ENCODE measurements at regions of chr4 and their contacts with region 1.

Region 1: DNA sequence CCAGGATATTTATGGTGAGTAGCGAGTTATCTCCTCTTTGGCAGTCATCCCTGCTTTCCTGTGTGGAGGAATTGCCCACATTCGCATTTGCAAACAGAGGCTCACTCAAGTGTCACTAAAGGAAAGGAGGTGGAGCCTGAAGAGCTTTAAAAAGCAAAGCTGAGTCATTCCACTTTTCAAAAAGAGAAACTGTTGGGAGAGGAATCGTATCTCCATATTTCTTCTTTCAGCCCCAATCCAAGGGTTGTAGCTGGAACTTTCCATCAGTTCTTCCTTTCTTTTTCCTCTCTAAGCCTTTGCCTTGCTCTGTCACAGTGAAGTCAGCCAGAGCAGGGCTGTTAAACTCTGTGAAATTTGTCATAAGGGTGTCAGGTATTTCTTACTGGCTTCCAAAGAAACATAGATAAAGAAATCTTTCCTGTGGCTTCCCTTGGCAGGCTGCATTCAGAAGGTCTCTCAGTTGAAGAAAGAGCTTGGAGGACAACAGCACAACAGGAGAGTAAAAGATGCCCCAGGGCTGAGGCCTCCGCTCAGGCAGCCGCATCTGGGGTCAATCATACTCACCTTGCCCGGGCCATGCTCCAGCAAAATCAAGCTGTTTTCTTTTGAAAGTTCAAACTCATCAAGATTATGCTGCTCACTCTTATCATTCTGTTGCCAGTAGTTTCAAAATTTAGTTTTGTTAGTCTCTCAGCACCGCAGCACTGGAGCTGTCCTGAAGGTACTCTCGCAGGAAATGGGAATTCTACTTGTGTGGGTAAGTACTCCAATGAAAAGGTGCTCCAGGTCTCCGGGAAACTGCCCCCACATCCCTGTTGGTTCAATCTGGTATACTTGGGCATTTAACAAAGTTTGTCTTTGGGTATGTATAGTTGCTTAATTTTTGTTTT is at the start of gene EGF:
- DNase-seq: peak; percentile 29 to 75 (median 38)
- ATAC-seq: peak; percentile 81
- H3K4me3 ChIP-seq: peak within 1 kb of the TSS; percentile 26
- H3K27ac ChIP-seq: peak within 1 kb of the TSS; percentile 73
- H3K4me1 ChIP-seq: peaks cover 0 to 16% of the 10 kb centered on the region in 2 experiments; a peak in 3 of 5 replicates
- H3K27me3 ChIP-seq: no peaks in the 10 kb centered on the region; a peak in 1 of 5 replicates
- CTCF ChIP-seq: no peak
- EP300 ChIP-seq: no peak
- POLR2A ChIP-seq: no peak; the same call in 1 of the 2 replicates
- RAD21 ChIP-seq: 0 out of 4 replicates have a peak, but pooled peaks of 1 of the 2 experiments have one; percentile 4
- polyA plus RNA-seq, gene EGF: 0.32 to 1.0 TPM

Region 2: GRCh38 chr4:109925396-109925795 is 12.4 kb after region 1 on chr4:
- CTCF ChIA-PET with region 1: no interaction called
- POLR2A ChIA-PET with region 1: interaction called, 10 read pairs
- in situ Hi-C with region 1: no loop called
- intact Hi-C with region 1: no loop called
- DNase-seq: no peak
- ATAC-seq: no peak
- H3K4me3 ChIP-seq: no peak overlapping the region
- H3K27ac ChIP-seq: no peak overlapping the region
- H3K4me1 ChIP-seq: no peaks in the 10 kb centered on the region
- H3K27me3 ChIP-seq: no peaks in the 10 kb centered on the region
- CTCF ChIP-seq: no peak
- EP300 ChIP-seq: no peak
- POLR2A ChIP-seq: no peak
- RAD21 ChIP-seq: no peak

Measured in K562 (cell line).